Gastrocnemius medialis (tissue), 4 donors: ENCODE measurements at regions of chr12 and their contacts with region 1.

Region 1: GRCh38 chr12:4434706-4435425 is 10.7 kb downstream of the FGF6 start:
- DNase-seq: no peak
- ATAC-seq: no peak
- H3K4me3 ChIP-seq: no peak overlapping the region
- H3K27ac ChIP-seq: peak overlapping the region; percentile 77 to 88 (median 81)
- H3K4me1 ChIP-seq: peaks cover 31 to 38% of the 10 kb centered on the region in 2 donors
- H3K27me3 ChIP-seq: no peaks in the 10 kb centered on the region
- CTCF ChIP-seq: no peak
- POLR2A ChIP-seq: no peak

Region 2: DNA sequence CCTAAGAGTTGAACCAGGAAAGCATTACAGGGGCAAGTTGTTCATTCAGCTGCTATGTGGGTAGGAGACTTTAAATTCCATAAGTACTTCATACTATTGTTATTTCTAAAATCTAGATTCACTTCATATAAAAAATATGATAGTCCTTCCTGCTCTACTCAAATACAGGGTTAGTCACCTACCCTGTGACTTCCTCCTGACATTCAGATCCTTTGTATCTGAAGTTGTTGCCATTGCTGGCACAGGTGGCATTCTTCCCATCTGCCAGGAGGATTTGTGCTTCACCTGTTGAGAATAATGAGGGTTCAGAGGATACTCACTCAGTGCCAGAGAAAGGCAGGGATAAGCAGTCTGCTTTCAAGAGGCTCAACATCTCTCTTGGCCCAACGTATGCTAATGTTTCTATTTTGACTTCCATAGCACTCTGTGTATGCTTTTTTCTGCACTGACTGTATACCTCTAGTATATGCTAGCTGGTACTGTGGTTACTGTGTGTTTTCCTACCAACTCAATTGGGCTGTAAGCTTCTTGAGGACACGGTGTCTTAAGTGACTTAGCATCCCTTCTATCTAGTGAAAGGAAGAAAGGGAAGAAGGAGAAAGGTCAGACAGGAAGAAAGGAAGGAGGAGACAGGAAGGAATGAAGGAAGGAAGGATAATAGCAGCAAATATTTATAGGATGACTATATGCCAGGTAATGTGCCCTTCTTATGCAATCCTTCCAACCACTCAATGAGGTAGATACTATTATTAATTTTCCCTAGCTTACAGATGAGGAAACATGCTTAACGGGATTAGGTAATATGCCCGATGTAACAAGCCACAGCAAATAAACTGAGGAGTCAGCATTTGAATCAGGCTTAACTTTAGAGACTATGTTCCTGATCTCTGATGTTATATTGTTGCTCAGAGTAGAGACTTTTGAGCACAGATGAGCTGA is 49.3 kb after region 1 on chr12:
- in situ Hi-C with region 1: no loop called
- intact Hi-C with region 1: loop called (anchors 1 kb)
- DNase-seq: no peak
- ATAC-seq: peak; percentile 87 to 94
- H3K4me3 ChIP-seq: no peak overlapping the region
- H3K27ac ChIP-seq: peak overlapping the region; percentile 29 to 68 (median 52)
- H3K4me1 ChIP-seq: peaks cover 5 to 13% of the 10 kb centered on the region in 2 donors
- H3K27me3 ChIP-seq: no peaks in the 10 kb centered on the region
- CTCF ChIP-seq: no peak
- POLR2A ChIP-seq: no peak